ENCODE measurements at regions of chr12 and their contacts with region 1.

Region 1: DNA sequence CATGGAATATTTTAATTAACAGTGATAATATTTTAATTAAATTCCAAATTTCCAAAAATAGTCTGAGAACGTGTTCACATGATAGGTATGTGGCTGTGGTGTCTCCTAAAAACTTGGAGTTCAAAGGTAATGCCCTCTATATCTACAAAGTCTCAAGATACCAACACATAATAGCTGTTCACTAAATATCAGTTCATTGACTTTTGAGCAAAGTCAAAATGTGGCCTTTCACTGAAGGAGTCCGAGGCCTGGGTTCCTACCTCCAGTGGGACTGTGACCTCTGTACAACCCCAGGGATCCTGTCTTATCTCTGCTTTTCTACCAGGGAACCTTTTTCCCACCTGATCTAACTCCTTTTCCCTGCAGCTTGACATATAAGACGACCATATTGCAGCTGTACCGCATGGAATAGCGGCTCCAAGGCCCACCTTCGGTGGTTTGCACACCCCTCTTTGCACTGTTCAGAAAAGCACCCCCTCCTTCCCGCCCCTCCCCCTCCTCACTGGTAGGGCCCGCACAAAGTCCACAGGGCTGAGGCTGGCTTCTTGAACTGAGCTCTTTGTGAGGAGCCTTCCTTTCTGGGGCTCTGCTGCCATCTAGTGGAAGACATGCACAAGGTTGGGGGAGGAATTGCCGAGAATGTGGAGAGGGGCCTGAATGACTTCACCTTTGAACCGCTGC is 3.1 kb downstream of the CCND2 start:
- DNase-seq: peak; percentile 85
- ATAC-seq: peak; percentile 48

Region 2: GRCh38 chr12:3885277-3886094 is 391.2 kb before region 1 on chr12:
- intact Hi-C with region 1: loop called (anchors 5 kb)
- DNase-seq: no peak
- ATAC-seq: peak; percentile 70

Region 3: GRCh38 chr12:3998968-3999826 is 277.5 kb before region 1 on chr12:
- intact Hi-C with region 1: loop called (anchors 5 kb)
- DNase-seq: no peak
- ATAC-seq: peak; percentile 33

Region 4: GRCh38 chr12:4030929-4031702 is 245.5 kb before region 1 on chr12:
- intact Hi-C with region 1: loop called (anchors 10 kb)
- DNase-seq: peak; percentile 88
- ATAC-seq: peak; percentile 99

Region 5: GRCh38 chr12:4107436-4107878 is 169.2 kb before region 1 on chr12:
- intact Hi-C with region 1: loop called (anchors 10 kb)
- DNase-seq: no peak
- ATAC-seq: peak; percentile 52